ENCODE measurements at regions of chr20 and their contacts with region 1.

Region 1: GRCh38 chr20:21505161-21505809 is 8.6 kb downstream of the NKX2-2 start:
- DNase-seq: peak in 9 of 10 donors; percentile 46 to 86 (median 80)
- H3K4me3 ChIP-seq: peak overlapping the region in 58 of 59 donors; percentile 25 to 73 (median 52)
- H3K27ac ChIP-seq: peak overlapping the region; percentile 47 to 98 (median 94)
- H3K27me3 ChIP-seq: peaks cover 0 to 76% (median 48%) of the 10 kb centered on the region in 45 donors
- CTCF ChIP-seq: peak; percentile 86 to 100 (median 98)

Region 2: GRCh38 chr20:20664795-20665589 is 840.3 kb before region 1 on chr20:
- intact Hi-C with region 1: loop called in 1 of 2 experiments (anchors 10 kb)
- DNase-seq: no peak
- H3K4me3 ChIP-seq: no peak overlapping the region
- H3K27ac ChIP-seq: no peak overlapping the region
- H3K27me3 ChIP-seq: no peaks in the 10 kb centered on the region
- CTCF ChIP-seq: peak in 55 of 56 donors; percentile 20 to 78 (median 59)

Region 3: GRCh38 chr20:20849161-20849560 is 656.1 kb before region 1 on chr20:
- intact Hi-C with region 1: loop called in 1 of 2 experiments (anchors 5 kb)
- DNase-seq: peak; percentile 6 to 89 (median 82)
- H3K4me3 ChIP-seq: peak overlapping the region in 2 of 59 donors; percentile 20 to 33
- H3K27ac ChIP-seq: peak overlapping the region in 58 of 59 donors; percentile 48 to 97 (median 89)
- H3K27me3 ChIP-seq: peaks cover 0 to 5% (median 0%) of the 10 kb centered on the region in 45 donors
- CTCF ChIP-seq: peak in 9 of 56 donors; percentile 7 to 48 (median 14)

Region 4: GRCh38 chr20:21048841-21049273 is 456.4 kb before region 1 on chr20:
- intact Hi-C with region 1: loop called in 1 of 2 experiments (anchors 5 kb)
- DNase-seq: peak in 1 of 10 donors; percentile 54
- H3K4me3 ChIP-seq: no peak overlapping the region
- H3K27ac ChIP-seq: no peak overlapping the region
- H3K27me3 ChIP-seq: peaks cover 0 to 26% (median 0%) of the 10 kb centered on the region in 45 donors
- CTCF ChIP-seq: peak in 55 of 56 donors; percentile 23 to 76 (median 56)

Region 5: DNA sequence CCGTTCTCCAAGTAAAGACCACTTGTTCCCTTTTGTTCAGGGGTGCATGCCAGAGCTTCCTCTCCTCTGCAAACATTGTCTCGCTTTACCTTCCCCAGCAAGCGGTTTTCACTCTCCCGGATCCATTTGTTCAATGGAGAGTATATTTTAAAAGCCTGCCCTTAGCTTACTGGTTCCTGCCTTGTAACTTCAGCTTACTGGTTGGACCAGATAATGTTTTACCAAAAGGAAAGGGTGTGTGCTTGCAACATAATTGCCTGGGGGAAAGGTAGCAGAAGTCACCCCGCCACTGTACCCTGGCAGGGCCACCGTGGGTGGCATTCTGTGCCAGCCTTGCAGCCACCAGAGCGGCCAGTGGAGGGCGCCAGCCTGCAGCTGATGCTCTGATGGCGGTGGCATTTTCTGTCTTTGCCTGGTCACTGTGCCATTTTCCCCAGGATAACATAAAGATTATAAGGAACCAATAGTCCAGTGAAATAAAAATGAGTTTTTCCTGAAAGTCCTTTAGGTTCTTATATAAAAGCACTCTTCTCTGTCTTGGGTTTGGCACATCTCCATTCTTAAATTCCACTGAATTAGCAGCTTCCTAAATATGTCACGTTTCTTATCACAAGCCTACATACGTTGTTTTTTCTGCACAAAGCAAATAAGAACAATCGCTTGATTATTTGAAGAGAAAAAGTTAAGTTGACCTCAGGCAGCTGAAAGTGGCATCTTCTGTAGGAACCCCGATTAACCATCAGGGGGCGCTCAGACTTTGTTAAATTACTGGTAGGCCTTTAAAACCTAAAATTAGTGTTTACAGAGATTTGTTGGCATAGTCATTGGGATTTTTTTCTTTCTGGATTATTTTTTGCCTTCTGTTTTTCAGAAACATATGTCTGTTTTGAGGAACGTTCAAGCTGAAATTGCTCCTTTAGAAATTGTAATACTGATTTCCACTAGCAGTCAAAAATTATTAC is 269.5 kb before region 1 on chr20:
- intact Hi-C with region 1: loop called (anchors 1 kb)
- DNase-seq: peak; percentile 43 to 87 (median 82)
- H3K4me3 ChIP-seq: peak overlapping the region in 54 of 59 donors; percentile 1 to 59 (median 32)
- H3K27ac ChIP-seq: peak overlapping the region; percentile 44 to 99 (median 93)
- H3K27me3 ChIP-seq: no peaks in the 10 kb centered on the region
- CTCF ChIP-seq: peak; percentile 60 to 95 (median 82)

Region 6: DNA sequence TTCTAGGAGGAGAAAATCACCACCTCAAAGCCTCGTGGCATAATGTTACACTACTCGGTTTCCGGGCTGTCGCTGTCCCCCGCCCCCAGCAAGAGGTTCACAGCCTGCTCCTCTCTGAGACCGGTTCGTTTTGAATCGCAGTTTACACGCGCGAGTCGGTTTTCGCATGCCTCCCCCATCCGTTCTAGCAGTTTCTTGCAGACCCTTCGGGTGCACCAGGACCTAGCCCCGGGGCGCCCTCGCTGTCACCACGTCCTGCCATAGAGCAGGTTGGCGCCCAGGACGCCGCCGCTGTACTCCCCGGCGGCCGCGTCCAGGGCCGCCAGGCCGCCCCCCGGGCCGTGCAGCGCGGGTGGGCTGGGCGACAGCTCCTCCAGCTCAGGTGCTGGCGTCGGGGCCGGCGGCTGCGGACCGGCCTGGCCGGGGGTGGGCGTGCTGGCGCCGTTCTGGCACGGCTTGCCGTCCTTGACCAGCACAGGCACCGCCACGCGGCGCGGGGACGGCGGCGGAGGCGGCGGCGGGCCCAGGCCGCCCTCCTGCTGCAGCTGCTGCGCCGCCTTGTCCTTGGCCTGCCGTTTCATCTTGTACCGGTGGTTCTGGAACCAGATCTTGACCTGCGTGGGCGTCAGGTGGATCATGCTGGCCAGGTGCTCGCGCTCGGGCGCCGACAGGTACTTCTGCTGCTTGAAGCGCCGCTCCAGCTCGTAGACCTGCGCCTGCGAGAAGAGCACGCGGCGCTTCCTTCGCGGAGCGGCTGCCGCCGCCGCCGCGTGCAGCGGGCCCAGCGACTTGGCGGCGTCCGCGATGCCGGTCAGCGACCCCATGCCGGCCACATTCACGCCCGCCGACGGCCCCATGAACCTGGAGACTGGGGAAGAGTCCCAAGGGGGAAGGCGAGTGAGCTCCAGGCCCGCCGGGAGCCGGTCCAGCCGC is 109.4 kb before region 1 on chr20:
- intact Hi-C with region 1: loop called in 1 of 2 experiments (anchors 10 kb)
- DNase-seq: no peak
- H3K4me3 ChIP-seq: peak overlapping the region in 50 of 59 donors; percentile 4 to 61 (median 38)
- H3K27ac ChIP-seq: no peak overlapping the region
- H3K27me3 ChIP-seq: peaks cover 13 to 95% (median 82%) of the 10 kb centered on the region in 45 donors
- CTCF ChIP-seq: no peak

Region 7: DNA sequence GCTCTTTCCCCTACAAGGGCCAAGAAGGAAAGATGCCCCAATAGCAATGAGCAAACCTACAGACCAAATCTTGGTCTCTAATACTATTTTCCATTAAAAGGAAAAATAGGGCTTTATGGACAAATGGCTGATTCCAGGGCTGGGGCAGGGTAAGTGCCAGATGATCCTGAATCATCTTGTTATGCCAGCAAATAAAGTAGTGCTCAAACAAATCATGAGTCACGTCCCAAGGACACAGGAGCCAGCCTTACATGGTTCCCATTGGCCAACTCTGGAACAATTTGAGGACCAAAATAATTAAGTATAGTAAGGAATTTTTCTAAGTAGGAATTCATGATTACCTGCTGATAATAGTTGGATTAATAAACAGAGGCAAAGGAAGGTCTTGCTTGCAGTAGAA is 54.7 kb before region 1 on chr20:
- intact Hi-C with region 1: no loop called
- DNase-seq: no peak
- H3K4me3 ChIP-seq: no peak overlapping the region
- H3K27ac ChIP-seq: no peak overlapping the region
- H3K27me3 ChIP-seq: peaks cover 0 to 7% (median 0%) of the 10 kb centered on the region in 45 donors
- CTCF ChIP-seq: no peak

Region 8: GRCh38 chr20:21571841-21572690 is 66.8 kb after region 1 on chr20:
- intact Hi-C with region 1: loop called in 1 of 2 experiments (anchors 5 kb)
- DNase-seq: peak in 2 of 10 donors; percentile 10 to 35
- H3K4me3 ChIP-seq: peak overlapping the region in 26 of 59 donors; percentile 4 to 45 (median 25)
- H3K27ac ChIP-seq: peak overlapping the region in 7 of 59 donors; percentile 21 to 58 (median 37)
- H3K27me3 ChIP-seq: peaks cover 0 to 4% (median 0%) of the 10 kb centered on the region in 45 donors
- CTCF ChIP-seq: peak; percentile 67 to 96 (median 88)

Measured in dorsolateral prefrontal cortex (tissue), 120 donors.